Activated CD8-positive, alpha-beta T cell treated with anti-CD3 and anti-CD28 coated beads, Interleukin-2, amount 10 ng/mL, durations not matched to agents 7 days and 5 days (primary cell): ENCODE measurements at regions of chr2 and their contacts with region 1.

Region 1: GRCh38 chr2:85538486-85539360 is at the start of gene MAT2A:
- DNase-seq: peak; percentile 88
- ATAC-seq: peak; percentile 71
- H3K4me3 Mint-ChIP-seq: peak within 1 kb of the TSS; percentile 96
- H3K27ac Mint-ChIP-seq: peak within 1 kb of the TSS; percentile 98
- H3K4me1 Mint-ChIP-seq: peaks cover 51% of the 10 kb centered on the region
- H3K27me3 Mint-ChIP-seq: no peaks in the 10 kb centered on the region
- total RNA-seq, gene MAT2A: 264 to 273 TPM

Region 2: GRCh38 chr2:85234868-85235267 is 303.9 kb before region 1 on chr2:
- CTCF ChIA-PET with region 1: no interaction called
- POLR2A ChIA-PET with region 1: no interaction called
- DNase-seq: no peak
- ATAC-seq: no peak
- H3K4me3 Mint-ChIP-seq: no peak overlapping the region
- H3K27ac Mint-ChIP-seq: no peak overlapping the region
- H3K4me1 Mint-ChIP-seq: no peaks in the 10 kb centered on the region
- H3K27me3 Mint-ChIP-seq: peaks cover 12% of the 10 kb centered on the region

Region 3: GRCh38 chr2:85390941-85391669 is 147.6 kb before region 1 on chr2:
- CTCF ChIA-PET with region 1: interaction called, 6 read pairs
- POLR2A ChIA-PET with region 1: interaction called, 10 read pairs
- DNase-seq: peak; percentile 82
- ATAC-seq: peak; percentile 82
- H3K4me3 Mint-ChIP-seq: no peak overlapping the region
- H3K27ac Mint-ChIP-seq: no peak overlapping the region
- H3K4me1 Mint-ChIP-seq: peaks cover 18% of the 10 kb centered on the region
- H3K27me3 Mint-ChIP-seq: no peaks in the 10 kb centered on the region

Region 4: GRCh38 chr2:85413592-85414421 is 124.9 kb before region 1 on chr2:
- CTCF ChIA-PET with region 1: interaction called, 51 read pairs
- POLR2A ChIA-PET with region 1: interaction called, 61 read pairs
- DNase-seq: peak; percentile 46
- ATAC-seq: peak; percentile 16
- H3K4me3 Mint-ChIP-seq: peak overlapping the region; percentile 72
- H3K27ac Mint-ChIP-seq: no peak overlapping the region
- H3K4me1 Mint-ChIP-seq: peaks cover 64% of the 10 kb centered on the region
- H3K27me3 Mint-ChIP-seq: peaks cover 3% of the 10 kb centered on the region

Region 5: DNA sequence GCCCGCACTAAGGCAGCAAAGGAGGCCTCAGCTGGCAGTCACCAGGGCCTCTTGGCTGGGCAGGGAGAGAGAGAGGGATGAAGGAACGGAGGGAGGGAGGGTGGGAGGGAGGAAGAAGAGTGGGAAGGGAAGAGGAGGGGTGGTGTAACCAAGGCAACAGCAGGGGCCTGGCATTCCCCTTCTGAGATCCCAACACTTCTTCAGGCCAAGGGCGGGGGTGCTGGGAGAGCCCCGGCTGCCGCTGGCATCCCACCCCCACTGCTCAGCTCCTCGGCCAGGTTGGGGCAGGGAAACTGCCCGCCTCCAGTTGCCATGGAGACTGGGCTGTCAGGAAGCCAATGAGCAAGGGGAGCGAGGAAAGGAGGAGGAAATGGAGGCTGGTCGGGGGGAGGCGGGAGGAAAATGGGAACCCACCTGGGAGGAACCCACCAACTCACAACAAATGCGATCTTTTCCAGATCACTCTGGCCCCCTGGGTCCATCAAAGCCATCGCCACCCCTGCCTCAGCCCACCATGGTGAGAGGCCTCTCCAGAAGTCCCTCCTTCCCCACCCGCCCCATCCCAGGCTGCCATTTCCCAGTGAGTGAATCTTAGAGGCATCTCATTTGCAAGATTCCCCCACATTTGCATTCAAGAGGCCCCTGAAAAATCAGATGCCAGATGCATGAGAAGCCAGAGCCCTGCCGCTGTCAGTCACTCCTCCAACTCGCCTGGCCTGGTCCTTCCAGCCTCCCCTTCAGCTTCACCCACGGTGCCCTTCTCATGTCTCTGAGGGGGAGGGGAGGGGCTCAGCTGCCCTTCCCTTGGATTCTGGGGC is 107.8 kb before region 1 on chr2:
- CTCF ChIA-PET with region 1: no interaction called
- POLR2A ChIA-PET with region 1: interaction called, 21 read pairs
- DNase-seq: no peak
- ATAC-seq: no peak
- H3K4me3 Mint-ChIP-seq: no peak overlapping the region
- H3K27ac Mint-ChIP-seq: no peak overlapping the region
- H3K4me1 Mint-ChIP-seq: peaks cover 11% of the 10 kb centered on the region
- H3K27me3 Mint-ChIP-seq: no peaks in the 10 kb centered on the region

Region 6: GRCh38 chr2:85437488-85438284 is 101.0 kb before region 1 on chr2:
- CTCF ChIA-PET with region 1: interaction called, 6 read pairs
- POLR2A ChIA-PET with region 1: interaction called, 88 read pairs
- DNase-seq: peak; percentile 77
- ATAC-seq: peak; percentile 83
- H3K4me3 Mint-ChIP-seq: peak overlapping the region; percentile 73
- H3K27ac Mint-ChIP-seq: peak overlapping the region; percentile 88
- H3K4me1 Mint-ChIP-seq: peaks cover 46% of the 10 kb centered on the region
- H3K27me3 Mint-ChIP-seq: no peaks in the 10 kb centered on the region

Region 7: DNA sequence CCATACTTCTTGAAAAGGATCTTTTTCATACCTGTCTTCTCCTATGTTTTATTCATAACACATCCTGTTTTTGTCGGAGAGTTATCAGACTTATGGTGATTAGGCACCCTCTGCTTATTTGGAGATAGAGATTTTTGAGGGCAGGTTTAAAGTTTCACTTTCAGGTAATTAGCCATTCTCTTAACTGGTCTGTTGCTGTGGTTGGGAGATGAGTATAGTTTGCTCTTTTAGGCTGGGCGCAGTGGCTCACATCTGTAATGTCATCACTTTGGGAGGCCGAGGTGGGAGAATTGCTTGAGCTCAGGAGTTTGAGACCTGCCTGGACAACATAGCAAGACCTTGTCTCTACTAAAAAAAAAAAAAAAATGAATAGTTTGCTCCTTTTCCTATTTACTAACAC is 104.0 kb after region 1 on chr2:
- CTCF ChIA-PET with region 1: no interaction called
- POLR2A ChIA-PET with region 1: no interaction called
- DNase-seq: no peak
- ATAC-seq: no peak
- H3K4me3 Mint-ChIP-seq: no peak overlapping the region
- H3K27ac Mint-ChIP-seq: peak overlapping the region; percentile 66
- H3K4me1 Mint-ChIP-seq: peaks cover 23% of the 10 kb centered on the region
- H3K27me3 Mint-ChIP-seq: no peaks in the 10 kb centered on the region